ENCODE measurements at regions of chr10 and their contacts with region 1.

Region 1: GRCh38 chr10:31759799-31760626 is 168.6 kb downstream of the ARHGAP12 start:
- DNase-seq: peak; percentile 86
- ATAC-seq: peak; percentile 90
- H3K4me3 ChIP-seq: peak overlapping the region; percentile 75 to 85
- H3K27ac ChIP-seq: peak overlapping the region; percentile 96
- H3K4me1 ChIP-seq: peaks cover 22 to 41% of the 10 kb centered on the region in 2 experiments
- H3K27me3 ChIP-seq: no peaks in the 10 kb centered on the region
- CTCF ChIP-seq: no peak
- POLR2A ChIP-seq: peak; percentile 68
- RAD21 ChIP-seq: no peak

Region 2: DNA sequence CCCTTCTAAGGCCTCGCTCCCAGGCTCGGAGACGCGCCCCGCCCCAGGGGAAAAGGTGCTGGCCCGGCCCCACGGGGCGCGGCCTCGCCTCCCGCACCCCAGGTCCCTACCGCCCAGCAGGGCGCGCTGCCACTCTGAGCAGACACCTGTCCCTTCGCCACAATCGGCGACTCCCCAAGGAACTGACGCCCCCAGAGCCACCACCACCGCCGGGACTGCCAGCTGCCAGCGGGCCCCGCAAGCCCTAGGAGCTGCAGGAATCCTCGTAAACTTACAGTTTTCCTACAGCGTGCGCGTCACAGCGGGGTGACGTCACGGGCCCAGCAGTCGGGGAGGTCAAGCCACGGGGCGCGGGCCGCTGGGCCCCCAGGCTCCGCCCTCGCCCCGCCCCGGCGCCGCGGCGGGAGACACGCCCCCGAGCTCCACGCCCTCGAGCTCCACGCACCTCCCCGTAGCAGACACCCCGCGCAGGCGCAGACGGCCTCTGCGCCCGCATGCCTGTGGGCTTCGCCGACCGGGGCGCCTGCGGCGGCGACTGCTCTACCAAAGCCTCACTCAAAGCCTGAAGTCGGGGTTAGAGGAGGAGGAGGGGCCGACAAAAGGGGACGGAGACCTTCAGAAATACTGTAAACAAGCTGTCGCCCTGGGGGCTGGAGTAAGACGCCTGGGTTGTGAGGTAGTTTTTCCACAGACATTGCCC is 728.3 kb before region 1 on chr10 and contains the start of gene ZNF438:
- CTCF ChIA-PET with region 1: no interaction called
- POLR2A ChIA-PET with region 1: no interaction called
- RAD21 ChIA-PET with region 1: no interaction called
- intact Hi-C with region 1: loop called (anchors 5 kb)
- DNase-seq: peak; percentile 76
- ATAC-seq: peak; percentile 84
- H3K4me3 ChIP-seq: peak within 1 kb of the TSS; percentile 57 to 65
- H3K27ac ChIP-seq: peak within 1 kb of the TSS; percentile 79
- H3K4me1 ChIP-seq: peaks cover 8 to 41% of the 10 kb centered on the region in 2 experiments
- H3K27me3 ChIP-seq: no peaks in the 10 kb centered on the region
- CTCF ChIP-seq: peak; percentile 27 to 59 (median 56); a peak in 5 of 6 replicates
- POLR2A ChIP-seq: no peak
- RAD21 ChIP-seq: peak; percentile 81
- total RNA-seq, gene ZNF438: 3.3 TPM